Stomach (tissue), 19 donors: ENCODE measurements at regions of chr9 and their contacts with region 1.

Region 1: DNA sequence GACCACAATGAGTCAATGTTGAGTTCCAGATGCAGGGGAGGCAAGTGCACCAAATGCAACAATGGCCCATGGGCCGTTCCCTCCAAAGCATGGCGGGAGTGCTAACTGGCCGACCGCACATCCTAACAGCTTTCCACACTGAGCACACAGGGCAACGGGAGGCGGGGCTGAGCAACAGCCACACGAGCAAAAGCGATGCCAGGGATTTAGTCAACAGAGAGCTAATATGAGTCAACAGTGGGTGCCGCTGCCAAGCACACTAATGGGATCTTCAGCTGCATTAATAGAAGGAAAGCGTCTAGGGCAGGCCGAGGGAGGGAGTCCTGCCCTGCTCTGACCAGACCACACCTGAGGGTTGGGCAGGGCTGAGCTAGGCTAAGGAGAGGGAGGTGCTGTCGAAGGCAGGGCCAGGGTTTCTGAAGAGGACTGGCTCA is 4.6 kb downstream of the EPB41L4B start:
- DNase-seq: peak; percentile 92 to 96
- H3K4me3 ChIP-seq: no peak overlapping the region
- H3K27ac ChIP-seq: peak overlapping the region; percentile 71 to 84 (median 79)
- H3K4me1 ChIP-seq: peaks cover 36 to 72% (median 62%) of the 10 kb centered on the region in 4 donors
- H3K27me3 ChIP-seq: peaks cover 0 to 48% (median 13%) of the 10 kb centered on the region in 3 donors
- CTCF ChIP-seq: peak in 1 of 7 experiments; percentile 20
- EP300 ChIP-seq: no peak
- POLR2A ChIP-seq: peak in 1 of 4 donors; percentile 79

Region 2: GRCh38 chr9:109244157-109245132 is 71.8 kb before region 1 on chr9:
- intact Hi-C with region 1: loop called (anchors 5 kb)
- DNase-seq: peak; percentile 79 to 89
- H3K4me3 ChIP-seq: no peak overlapping the region
- H3K27ac ChIP-seq: no peak overlapping the region
- H3K4me1 ChIP-seq: peaks cover 0 to 28% (median 15%) of the 10 kb centered on the region in 4 donors
- H3K27me3 ChIP-seq: peaks cover 0 to 5% (median 0%) of the 10 kb centered on the region in 3 donors
- CTCF ChIP-seq: peak in 5 of 7 experiments; percentile 63 to 95 (median 88)
- EP300 ChIP-seq: no peak
- POLR2A ChIP-seq: no peak

Region 3: DNA sequence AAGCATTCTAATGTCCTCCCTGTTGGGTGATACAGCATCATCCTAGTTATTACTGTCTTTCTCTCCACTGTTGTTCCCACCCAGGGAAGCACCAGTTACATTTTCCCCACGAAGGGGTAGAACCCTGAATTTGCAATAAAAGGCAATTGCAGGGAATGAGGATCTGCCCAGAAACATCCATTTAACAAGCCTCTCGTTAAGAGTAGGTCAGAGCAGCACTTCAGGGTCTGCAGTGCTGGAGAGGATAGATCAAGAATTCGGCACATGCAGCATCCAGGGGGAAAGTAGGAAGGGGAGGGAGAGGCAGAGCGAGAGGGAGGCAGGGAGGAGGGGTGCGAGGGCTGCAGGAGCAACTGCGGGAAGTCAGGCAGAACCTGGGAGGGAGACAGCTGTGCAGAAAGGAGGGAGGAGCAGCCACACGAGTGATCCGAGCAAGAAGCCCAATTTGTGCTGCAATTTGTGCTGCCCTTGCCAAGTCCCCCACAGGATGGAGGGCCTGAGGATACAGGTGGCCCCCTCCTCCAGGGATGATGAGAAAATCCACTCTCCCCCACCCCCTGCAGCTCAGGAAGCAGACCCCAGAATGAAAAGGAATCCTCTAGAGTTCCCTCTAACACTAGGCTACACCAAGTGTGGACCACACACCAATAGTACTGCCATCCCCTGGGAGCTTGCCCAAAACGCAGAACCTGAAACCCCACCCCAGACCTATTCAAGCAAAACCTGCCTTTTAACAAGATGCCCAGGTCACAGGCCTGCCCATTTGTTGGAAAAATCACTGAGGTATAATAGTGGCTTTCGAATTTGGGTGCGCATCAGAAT is 57.5 kb before region 1 on chr9:
- intact Hi-C with region 1: no loop called
- DNase-seq: peak in 1 of 2 donors; percentile 55
- H3K4me3 ChIP-seq: no peak overlapping the region
- H3K27ac ChIP-seq: no peak overlapping the region
- H3K4me1 ChIP-seq: peaks cover 0 to 16% (median 12%) of the 10 kb centered on the region in 4 donors
- H3K27me3 ChIP-seq: no peaks in the 10 kb centered on the region
- CTCF ChIP-seq: no peak
- EP300 ChIP-seq: no peak
- POLR2A ChIP-seq: no peak

Region 4: DNA sequence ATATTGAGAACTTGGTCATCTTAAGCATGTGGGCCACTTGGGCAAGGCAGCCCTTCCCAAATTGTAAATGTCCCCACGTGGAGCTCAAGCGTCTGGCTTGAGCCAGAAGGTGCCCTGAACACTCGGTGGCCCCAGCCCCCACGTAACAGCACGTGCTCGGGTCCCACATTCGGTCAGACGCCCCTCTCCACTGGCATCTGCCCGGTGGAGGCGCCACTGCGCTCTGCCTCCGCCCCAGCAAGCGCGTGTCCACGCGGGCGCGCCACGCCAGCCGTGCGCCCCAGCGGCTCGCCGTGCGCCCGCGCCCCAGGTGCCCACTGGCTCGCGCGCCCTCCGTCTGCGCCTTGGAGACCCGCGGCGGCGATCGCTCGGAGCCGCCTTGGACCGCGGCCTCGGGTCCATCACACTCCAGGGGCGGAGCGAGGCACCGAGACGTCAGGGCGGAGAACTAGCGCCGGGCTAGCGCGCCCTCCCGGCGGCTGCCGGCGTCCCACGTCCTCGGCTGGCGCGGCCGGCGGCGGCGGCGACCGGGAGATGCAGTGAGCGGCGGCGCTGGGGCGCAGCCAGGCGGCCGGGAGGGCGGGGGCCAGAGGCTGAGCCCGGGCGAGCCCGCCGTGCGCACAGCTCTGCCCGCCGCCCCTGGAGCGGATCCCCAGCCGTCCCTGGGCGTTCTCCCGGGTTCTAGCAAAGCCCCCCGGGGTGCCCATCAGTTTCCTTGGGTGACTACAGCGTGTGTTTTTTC is 463.7 kb after region 1 on chr9 and contains the start of gene PALM2AKAP2:
- intact Hi-C with region 1: no loop called
- DNase-seq: peak in 1 of 2 donors; percentile 88
- H3K4me3 ChIP-seq: peak within 1 kb of the TSS; percentile 46 to 49 (median 47)
- H3K27ac ChIP-seq: peak within 1 kb of the TSS in 4 of 5 donors; percentile 16 to 71 (median 56)
- H3K4me1 ChIP-seq: peaks cover 0 to 14% (median 10%) of the 10 kb centered on the region in 4 donors
- H3K27me3 ChIP-seq: peaks cover 0 to 47% (median 19%) of the 10 kb centered on the region in 3 donors
- CTCF ChIP-seq: no peak
- EP300 ChIP-seq: no peak
- POLR2A ChIP-seq: no peak
- total RNA-seq, gene PALM2AKAP2: 1.3 to 6.2 (median 1.7) TPM in 3 of 5 donors, not detected in the others